CD8-positive, alpha-beta memory T cell (primary cell): ENCODE measurements at regions of chr6 and their contacts with region 1.

Region 1: GRCh38 chr6:111382476-111383300 is 100.3 kb downstream of the REV3L start:
- DNase-seq: no peak
- H3K4me3 ChIP-seq: no peak overlapping the region
- H3K4me3 Mint-ChIP-seq: no peak overlapping the region
- H3K27ac ChIP-seq: no peak overlapping the region
- H3K27ac Mint-ChIP-seq: peak overlapping the region in 1 of 8 donors; percentile 3
- H3K4me1 ChIP-seq: no peaks in the 10 kb centered on the region
- H3K4me1 Mint-ChIP-seq: no peaks in the 10 kb centered on the region
- H3K27me3 ChIP-seq: no peaks in the 10 kb centered on the region
- H3K27me3 Mint-ChIP-seq: no peaks in the 10 kb centered on the region

Region 2: GRCh38 chr6:110897433-110897832 is 485.3 kb before region 1 on chr6:
- CTCF ChIA-PET with region 1: no interaction called
- POLR2A ChIA-PET with region 1: no interaction called
- DNase-seq: no peak
- H3K4me3 ChIP-seq: no peak overlapping the region
- H3K4me3 Mint-ChIP-seq: no peak overlapping the region
- H3K27ac ChIP-seq: no peak overlapping the region
- H3K27ac Mint-ChIP-seq: no peak overlapping the region
- H3K4me1 ChIP-seq: no peaks in the 10 kb centered on the region
- H3K4me1 Mint-ChIP-seq: no peaks in the 10 kb centered on the region
- H3K27me3 ChIP-seq: no peaks in the 10 kb centered on the region
- H3K27me3 Mint-ChIP-seq: peaks cover 0 to 2% of the 10 kb centered on the region in 2 donors

Region 3: DNA sequence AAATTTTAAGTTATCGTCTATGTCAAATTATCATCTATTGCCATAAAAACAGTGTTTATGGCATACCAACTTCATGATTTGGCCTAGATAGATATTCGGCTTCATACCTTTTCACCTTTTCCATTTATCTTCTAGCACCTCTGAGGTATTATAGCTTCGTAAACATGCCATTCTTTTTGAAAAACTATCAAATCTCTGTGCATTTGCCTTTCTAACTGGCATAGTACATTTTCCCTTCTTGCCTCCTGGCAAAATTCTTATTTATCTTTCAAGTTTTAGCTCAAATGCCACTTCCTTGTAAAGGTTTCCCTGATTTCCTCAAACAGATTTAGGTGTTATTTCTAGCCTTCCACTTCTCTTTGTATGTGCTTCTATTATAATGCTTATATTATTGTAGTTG is 107.4 kb after region 1 on chr6:
- CTCF ChIA-PET with region 1: no interaction called
- POLR2A ChIA-PET with region 1: interaction called, 14 read pairs
- DNase-seq: no peak
- H3K4me3 ChIP-seq: no peak overlapping the region
- H3K4me3 Mint-ChIP-seq: peak overlapping the region in 1 of 7 donors; percentile 30
- H3K27ac ChIP-seq: no peak overlapping the region
- H3K27ac Mint-ChIP-seq: peak overlapping the region in 1 of 8 donors; percentile 73
- H3K4me1 ChIP-seq: peaks cover 17% of the 10 kb centered on the region
- H3K4me1 Mint-ChIP-seq: peaks cover 19 to 47% (median 31%) of the 10 kb centered on the region in 3 donors
- H3K27me3 ChIP-seq: no peaks in the 10 kb centered on the region
- H3K27me3 Mint-ChIP-seq: no peaks in the 10 kb centered on the region

Region 4: GRCh38 chr6:111657146-111657545 is 274.5 kb after region 1 on chr6:
- CTCF ChIA-PET with region 1: no interaction called
- POLR2A ChIA-PET with region 1: interaction called, 11 read pairs
- DNase-seq: no peak
- H3K4me3 ChIP-seq: no peak overlapping the region
- H3K4me3 Mint-ChIP-seq: no peak overlapping the region
- H3K27ac ChIP-seq: no peak overlapping the region
- H3K27ac Mint-ChIP-seq: peak overlapping the region in 3 of 8 donors; percentile 2 to 32 (median 18)
- H3K4me1 ChIP-seq: no peaks in the 10 kb centered on the region
- H3K4me1 Mint-ChIP-seq: peaks cover 0 to 6% (median 0%) of the 10 kb centered on the region in 3 donors
- H3K27me3 ChIP-seq: no peaks in the 10 kb centered on the region
- H3K27me3 Mint-ChIP-seq: peaks cover 0 to 4% of the 10 kb centered on the region in 2 donors

Region 5: GRCh38 chr6:111737065-111737521 is 354.4 kb after region 1 on chr6:
- CTCF ChIA-PET with region 1: no interaction called
- POLR2A ChIA-PET with region 1: no interaction called
- DNase-seq: peak in 1 of 5 donors; percentile 68
- H3K4me3 ChIP-seq: no peak overlapping the region
- H3K4me3 Mint-ChIP-seq: peak overlapping the region; percentile 27 to 81 (median 69)
- H3K27ac ChIP-seq: no peak overlapping the region
- H3K27ac Mint-ChIP-seq: peak overlapping the region; percentile 88 to 100 (median 96)
- H3K4me1 ChIP-seq: peaks cover 94% of the 10 kb centered on the region
- H3K4me1 Mint-ChIP-seq: peaks cover 95 to 98% (median 97%) of the 10 kb centered on the region in 3 donors
- H3K27me3 ChIP-seq: no peaks in the 10 kb centered on the region
- H3K27me3 Mint-ChIP-seq: no peaks in the 10 kb centered on the region

Region 6: GRCh38 chr6:112179631-112180030 is 796.9 kb after region 1 on chr6:
- CTCF ChIA-PET with region 1: no interaction called
- POLR2A ChIA-PET with region 1: no interaction called
- DNase-seq: no peak
- H3K4me3 ChIP-seq: no peak overlapping the region
- H3K4me3 Mint-ChIP-seq: no peak overlapping the region
- H3K27ac ChIP-seq: no peak overlapping the region
- H3K27ac Mint-ChIP-seq: no peak overlapping the region
- H3K4me1 ChIP-seq: no peaks in the 10 kb centered on the region
- H3K4me1 Mint-ChIP-seq: no peaks in the 10 kb centered on the region
- H3K27me3 ChIP-seq: peaks cover 4% of the 10 kb centered on the region
- H3K27me3 Mint-ChIP-seq: peaks cover 16 to 52% of the 10 kb centered on the region in 2 donors